Right ventricle myocardium inferior (tissue), 1 donor: ENCODE measurements at regions of chr3 and their contacts with region 1.

Region 1: DNA sequence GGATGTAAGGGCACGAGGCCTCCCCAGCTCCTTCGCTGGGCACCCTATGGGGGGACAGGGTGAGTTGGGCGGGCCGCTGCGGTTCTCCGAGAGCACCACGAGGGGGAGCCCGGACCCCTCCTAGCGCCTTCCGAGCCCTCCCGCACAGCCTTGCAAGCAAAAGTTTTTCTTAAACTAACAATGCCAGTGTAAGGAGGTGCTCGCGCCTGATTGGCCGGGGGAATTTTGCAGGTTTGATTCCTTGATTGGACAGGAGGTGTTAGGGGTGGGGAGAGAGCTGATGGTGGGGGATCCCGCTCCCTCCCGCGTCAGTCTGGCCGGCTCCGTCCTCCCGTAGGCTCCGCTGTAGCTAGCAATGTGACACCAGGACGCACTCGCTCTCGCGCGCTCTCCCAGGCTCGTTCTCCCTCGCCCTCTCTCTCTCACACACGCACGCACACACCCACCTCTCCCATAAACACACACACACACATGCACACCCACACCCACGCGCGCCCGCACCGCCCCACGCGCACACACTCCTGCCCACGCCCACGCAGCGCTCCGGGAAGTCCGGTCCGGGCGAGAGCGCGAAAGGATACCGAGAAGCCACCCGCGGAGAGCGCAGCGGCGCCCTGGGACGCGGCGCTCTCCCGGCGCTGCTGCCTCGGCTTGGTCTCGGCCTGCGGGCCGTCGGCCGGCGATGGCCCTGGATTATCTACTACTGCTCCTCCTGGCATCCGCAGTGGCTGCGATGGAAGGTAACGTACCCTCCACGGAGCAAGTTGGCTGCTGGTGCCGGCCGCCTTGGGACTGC is at the start of gene EPHB1:
- DNase-seq: peak; percentile 84
- ATAC-seq: peak; percentile 90
- total RNA-seq, gene EPHB1: 1.4 TPM

Region 2: DNA sequence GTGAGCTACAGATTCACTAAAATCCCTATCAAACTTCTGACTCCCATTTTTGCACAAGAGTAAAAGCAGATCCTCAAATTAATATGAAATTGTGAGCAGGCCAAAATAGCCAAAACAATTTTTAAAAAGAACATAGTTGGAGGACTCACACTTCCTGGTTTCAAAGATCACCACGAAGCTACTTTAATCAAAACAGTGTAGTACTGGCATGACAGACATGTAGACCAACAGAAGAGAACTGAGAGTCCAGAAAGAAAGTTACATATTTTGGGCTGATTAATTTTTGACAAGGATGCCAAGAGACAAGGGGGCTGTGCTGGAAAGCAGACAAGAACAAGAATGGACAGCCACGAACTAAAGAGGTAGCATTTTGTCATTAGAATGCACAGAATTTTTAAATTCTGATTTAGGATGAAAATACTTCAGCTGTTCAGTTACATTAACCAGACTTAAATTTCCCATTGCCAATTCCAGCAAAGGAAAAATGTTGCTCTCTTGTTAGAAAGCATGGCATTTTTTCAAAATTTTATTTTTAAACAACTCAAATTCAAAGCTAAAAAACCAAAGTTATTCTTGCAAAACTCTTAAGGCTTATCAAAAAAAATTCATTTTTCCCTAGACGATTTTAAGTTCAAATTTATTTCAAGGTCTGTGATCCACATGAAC is 558.5 kb before region 1 on chr3:
- intact Hi-C with region 1: no loop called
- DNase-seq: no peak
- ATAC-seq: peak; percentile 60

Region 3: DNA sequence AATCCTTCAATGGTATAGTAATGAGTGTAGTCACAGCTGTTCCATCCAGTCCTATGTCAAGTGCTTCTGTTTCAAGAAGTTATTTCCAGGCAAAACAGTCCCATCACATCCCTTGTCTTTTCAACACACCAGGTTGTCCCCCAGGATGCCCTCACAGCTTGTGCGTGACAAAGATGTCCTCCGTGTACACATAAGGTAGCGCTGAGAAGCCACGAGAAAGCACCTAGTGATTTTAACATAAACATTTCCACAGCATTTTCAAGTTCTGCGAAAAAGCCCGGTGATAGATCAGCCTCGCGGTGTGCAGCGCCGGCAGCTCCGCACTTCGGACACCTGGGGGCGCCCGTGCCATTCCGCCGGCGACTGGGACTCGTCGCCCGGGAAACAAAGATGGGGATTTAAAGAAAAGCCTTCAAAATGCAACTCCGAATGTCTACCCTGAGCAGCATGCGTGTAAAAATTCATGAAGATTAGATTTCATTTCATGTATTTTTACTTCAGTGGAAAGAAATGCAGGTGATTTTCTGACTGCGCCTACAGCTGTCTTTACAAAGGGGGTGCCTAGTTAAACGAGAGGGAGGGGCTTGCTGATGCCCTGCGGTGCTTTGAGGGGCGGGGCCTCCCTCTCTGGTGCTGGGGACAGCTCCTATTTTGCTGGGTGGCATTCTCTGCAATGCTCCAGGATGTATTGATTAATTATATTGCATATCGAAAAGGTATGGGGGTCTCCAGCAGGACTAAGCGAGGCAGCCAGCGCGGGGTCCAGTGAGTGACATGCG is 194.3 kb before region 1 on chr3:
- intact Hi-C with region 1: loop called (anchors 5 kb)
- DNase-seq: peak; percentile 91
- ATAC-seq: peak; percentile 60

Region 4: DNA sequence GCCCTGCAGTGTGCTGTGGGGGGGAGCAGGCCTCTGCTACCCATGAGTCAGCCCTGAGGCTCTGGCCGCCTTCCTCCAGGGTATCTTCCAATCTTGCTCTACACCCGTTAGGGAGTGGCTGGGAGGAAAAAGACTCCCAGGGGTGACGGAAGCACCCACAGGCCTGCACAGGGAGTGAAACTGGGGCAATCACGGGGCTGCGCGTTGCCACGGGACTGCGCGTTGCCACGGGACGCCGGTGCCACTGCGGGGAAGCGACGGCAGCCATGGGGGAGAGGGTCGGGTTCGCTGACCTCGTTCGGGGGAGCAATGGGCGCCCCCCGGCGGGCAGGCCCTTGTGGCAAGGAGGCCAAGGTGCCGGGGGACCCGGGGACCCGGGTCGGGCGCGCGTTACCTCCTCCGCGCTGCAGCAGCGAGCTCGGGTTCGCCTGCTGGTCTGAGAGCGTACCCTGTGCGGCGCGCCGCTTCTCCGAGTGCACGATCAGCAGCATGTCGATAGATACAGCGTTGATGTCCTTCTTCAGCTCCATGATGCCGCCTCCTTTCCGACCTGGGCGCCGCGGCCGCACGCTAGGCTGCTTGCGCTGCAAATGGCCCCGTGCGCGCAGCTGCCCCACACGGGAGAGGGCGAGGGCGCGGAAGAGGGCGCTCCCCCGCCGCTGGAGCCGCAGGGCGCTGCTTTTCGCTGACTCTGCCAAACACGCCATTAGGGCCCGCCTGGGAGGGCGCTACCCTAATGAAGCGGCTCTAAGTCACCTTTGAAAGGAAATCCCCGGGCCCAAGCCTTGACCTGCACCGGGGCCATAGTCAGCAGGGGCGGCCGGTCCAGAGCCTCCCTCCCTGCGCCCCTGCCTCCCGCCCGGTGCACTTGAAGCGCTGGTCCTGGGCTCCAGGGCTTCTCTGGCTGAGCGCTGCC is 144.5 kb before region 1 on chr3 and contains the start of gene KY:
- intact Hi-C with region 1: loop called (anchors 1 kb)
- DNase-seq: peak; percentile 81
- ATAC-seq: peak; percentile 87
- total RNA-seq, gene KY: 16.7 TPM

Region 5: GRCh38 chr3:134978658-134979057 is 183.5 kb after region 1 on chr3:
- intact Hi-C with region 1: loop called (anchors 10 kb)
- DNase-seq: no peak
- ATAC-seq: no peak

Region 6: GRCh38 chr3:135240426-135240825 is 445.3 kb after region 1 on chr3:
- intact Hi-C with region 1: loop called (anchors 10 kb)
- DNase-seq: no peak
- ATAC-seq: no peak

Region 7: DNA sequence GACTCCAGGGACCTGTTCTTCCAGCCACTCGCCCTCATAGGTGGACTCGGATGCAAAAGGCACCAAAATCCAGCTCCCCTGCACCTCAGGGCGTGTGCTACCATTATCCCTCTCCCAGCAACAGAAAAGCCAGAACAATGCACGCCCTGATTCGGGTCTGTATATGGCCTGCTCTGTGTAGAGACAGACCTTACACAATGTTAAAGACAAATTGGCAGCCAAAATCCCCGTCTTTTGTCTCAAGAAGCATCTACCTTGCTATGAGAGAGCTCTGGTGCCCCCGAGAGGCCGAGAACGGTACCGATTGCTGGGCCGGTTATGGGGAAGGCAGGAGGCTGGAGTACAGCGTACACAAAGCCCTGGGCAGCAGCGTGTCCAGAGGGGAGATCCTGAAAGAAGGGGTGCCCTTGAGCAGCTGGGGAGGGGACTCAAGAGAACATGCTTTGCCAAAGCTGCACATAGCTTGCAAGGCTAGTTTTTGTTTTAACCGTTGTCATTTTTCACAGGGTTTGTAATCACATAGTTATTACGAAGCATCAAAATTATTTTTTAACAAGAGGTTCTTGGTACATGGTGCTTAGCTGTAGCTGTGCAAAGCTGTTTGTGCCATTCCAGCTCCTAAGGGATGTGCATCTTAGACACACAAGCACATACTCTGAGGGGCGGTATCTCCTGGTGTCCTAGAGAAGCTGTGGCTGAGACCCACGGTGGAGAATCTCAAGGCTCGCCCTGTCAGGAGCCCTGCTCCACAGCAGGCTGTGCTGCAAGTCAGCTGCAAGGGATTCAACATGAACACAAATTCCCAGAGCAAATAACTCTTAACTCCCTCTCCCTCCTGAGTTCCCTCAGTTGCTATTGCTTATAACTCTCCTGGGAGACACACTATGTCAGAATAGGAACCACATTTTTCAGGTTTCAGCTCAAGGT is 708.9 kb after region 1 on chr3:
- intact Hi-C with region 1: loop called (anchors 2 kb)
- DNase-seq: peak; percentile 67
- ATAC-seq: peak; percentile 72

Region 8: DNA sequence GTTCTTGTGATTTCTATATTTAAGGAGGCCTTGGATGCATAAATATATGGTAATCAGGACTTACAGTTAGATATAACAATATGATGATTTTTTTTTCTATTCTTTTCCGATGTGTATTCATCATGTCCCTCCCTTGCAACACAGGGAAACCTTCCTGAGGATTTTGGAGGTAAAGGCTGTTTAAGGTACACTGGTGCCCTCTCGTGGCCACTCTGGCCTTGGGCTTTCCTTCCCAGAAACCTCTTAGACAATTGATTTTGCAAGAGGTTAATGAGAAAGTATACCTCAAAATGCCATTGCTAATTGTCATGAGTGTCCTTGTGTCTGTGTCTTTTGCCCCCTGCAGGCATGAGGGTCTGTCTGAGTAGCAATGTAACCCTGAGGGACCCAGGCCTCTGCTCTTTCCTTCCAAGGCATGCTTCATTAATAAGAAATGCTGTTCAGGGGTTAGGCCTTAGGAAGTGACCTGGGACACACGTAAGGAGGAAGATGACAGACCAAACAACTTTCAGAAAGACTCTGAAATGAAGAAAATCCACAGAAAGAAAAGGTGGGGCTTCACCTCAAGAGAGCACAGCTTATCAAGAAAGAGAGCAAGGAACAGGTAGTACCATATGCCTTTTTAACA is 1100.1 kb after region 1 on chr3:
- intact Hi-C with region 1: loop called (anchors 2 kb)
- DNase-seq: no peak
- ATAC-seq: peak; percentile 56